Panc1 (cell line): ENCODE measurements at regions of chr11 and their contacts with region 1.

Region 1: DNA sequence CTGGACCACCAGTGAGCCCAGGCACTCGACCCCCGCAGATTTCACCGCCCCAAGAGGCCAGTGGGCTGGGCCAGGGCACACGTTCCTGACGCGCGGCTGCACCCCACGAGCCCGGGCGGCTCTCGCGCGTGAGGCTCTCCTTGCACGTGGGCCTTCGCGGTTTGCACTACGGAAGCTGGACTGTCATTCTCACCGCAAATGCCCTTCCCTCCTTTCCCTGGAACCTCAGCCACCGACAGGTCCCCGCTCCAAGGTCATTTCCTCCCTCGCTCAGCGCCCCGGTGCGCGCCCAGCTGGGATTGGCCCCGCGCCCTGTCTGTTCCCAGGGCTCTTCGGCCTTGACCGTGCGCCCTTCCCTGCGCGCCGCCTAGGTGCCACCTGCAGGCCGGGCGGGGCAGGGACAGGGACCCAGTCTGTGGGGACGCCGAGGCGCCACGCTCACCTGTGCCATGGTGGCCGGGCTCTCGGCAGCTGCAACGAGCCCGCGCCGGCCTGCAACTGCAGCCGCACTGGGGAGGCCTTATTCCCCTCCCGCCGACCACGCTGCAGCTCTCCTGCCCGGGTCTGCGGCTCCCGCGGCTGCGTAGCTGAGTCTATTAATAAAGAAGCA is 2.1 kb upstream of the CPT1A start:
- DNase-seq: no peak
- ATAC-seq: peak; percentile 84
- H3K4me3 ChIP-seq: peak overlapping the region; percentile 46 to 70
- H3K27ac ChIP-seq: peak overlapping the region; percentile 78
- H3K4me1 ChIP-seq: peaks cover 16% of the 10 kb centered on the region
- H3K27me3 ChIP-seq: no peaks in the 10 kb centered on the region
- CTCF ChIP-seq: peak; percentile 96

Region 2: GRCh38 chr11:68610452-68611116 is 233.2 kb before region 1 on chr11:
- CTCF ChIA-PET with region 1: no interaction called
- POLR2A ChIA-PET with region 1: interaction called, 17 read pairs
- in situ Hi-C with region 1: no loop called
- intact Hi-C with region 1: no loop called
- DNase-seq: no peak
- ATAC-seq: peak; percentile 54
- H3K4me3 ChIP-seq: no peak overlapping the region
- H3K27ac ChIP-seq: no peak overlapping the region
- H3K4me1 ChIP-seq: no peaks in the 10 kb centered on the region
- H3K27me3 ChIP-seq: no peaks in the 10 kb centered on the region
- CTCF ChIP-seq: no peak

Region 3: GRCh38 chr11:68741463-68741862 is 102.3 kb before region 1 on chr11:
- CTCF ChIA-PET with region 1: no interaction called
- POLR2A ChIA-PET with region 1: no interaction called
- in situ Hi-C with region 1: no loop called
- intact Hi-C with region 1: no loop called
- DNase-seq: no peak
- ATAC-seq: no peak
- H3K4me3 ChIP-seq: no peak overlapping the region
- H3K27ac ChIP-seq: no peak overlapping the region
- H3K4me1 ChIP-seq: no peaks in the 10 kb centered on the region
- H3K27me3 ChIP-seq: no peaks in the 10 kb centered on the region
- CTCF ChIP-seq: no peak

Region 4: GRCh38 chr11:68806921-68807844 is 36.6 kb before region 1 on chr11:
- CTCF ChIA-PET with region 1: no interaction called
- POLR2A ChIA-PET with region 1: no interaction called
- in situ Hi-C with region 1: no loop called
- intact Hi-C with region 1: no loop called
- DNase-seq: no peak
- ATAC-seq: no peak
- H3K4me3 ChIP-seq: no peak overlapping the region
- H3K27ac ChIP-seq: no peak overlapping the region
- H3K4me1 ChIP-seq: no peaks in the 10 kb centered on the region
- H3K27me3 ChIP-seq: no peaks in the 10 kb centered on the region
- CTCF ChIP-seq: no peak

Region 5: DNA sequence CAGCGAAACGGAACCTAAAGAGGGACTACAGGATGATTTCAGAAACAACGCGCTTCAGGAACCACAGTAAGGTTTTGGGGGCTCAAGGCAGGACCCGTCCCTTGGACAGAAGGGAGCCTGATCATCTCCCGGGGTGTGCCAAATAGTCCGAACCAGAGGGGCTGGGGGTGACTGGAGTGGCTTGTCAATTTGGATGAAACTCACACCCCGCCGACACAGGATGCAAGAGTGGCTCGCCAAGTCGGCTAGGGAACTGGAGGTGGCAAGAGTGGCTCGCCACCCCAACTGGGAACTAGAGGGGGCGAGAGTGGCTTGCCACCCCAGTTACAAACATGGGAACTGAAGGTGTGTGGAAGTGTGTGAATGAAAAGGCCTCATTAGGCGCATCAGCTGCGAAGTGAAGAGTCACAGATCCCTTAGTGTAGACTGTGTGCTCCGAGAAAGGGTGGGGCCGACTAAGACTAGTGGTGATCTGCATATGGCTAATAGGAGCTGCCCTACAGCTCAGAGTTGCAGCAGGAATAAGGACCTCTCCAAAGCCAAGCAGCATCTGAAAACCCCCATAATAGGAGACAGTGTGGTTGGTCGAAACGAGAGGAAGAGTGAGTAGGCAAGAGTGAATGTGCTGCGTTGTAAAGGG is 24.5 kb after region 1 on chr11:
- CTCF ChIA-PET with region 1: interaction called, 3 read pairs
- POLR2A ChIA-PET with region 1: interaction called, 11 read pairs
- in situ Hi-C with region 1: no loop called
- intact Hi-C with region 1: no loop called
- DNase-seq: no peak
- ATAC-seq: no peak
- H3K4me3 ChIP-seq: no peak overlapping the region
- H3K27ac ChIP-seq: no peak overlapping the region
- H3K4me1 ChIP-seq: peaks cover 12% of the 10 kb centered on the region; the same call in 1 of the 2 replicates
- H3K27me3 ChIP-seq: peaks cover 2% of the 10 kb centered on the region; the same call in 1 of the 2 replicates
- CTCF ChIP-seq: no peak

Region 6: GRCh38 chr11:68969386-68969785 is 125.6 kb after region 1 on chr11:
- CTCF ChIA-PET with region 1: no interaction called
- POLR2A ChIA-PET with region 1: interaction called, 11 read pairs
- in situ Hi-C with region 1: no loop called
- intact Hi-C with region 1: no loop called
- DNase-seq: no peak
- ATAC-seq: no peak
- H3K4me3 ChIP-seq: no peak overlapping the region
- H3K27ac ChIP-seq: no peak overlapping the region
- H3K4me1 ChIP-seq: no peaks in the 10 kb centered on the region
- H3K27me3 ChIP-seq: peaks cover 6% of the 10 kb centered on the region; the same call in 1 of the 2 replicates
- CTCF ChIP-seq: no peak